ENCODE measurements at regions of chrX and their contacts with region 1.

Region 1: DNA sequence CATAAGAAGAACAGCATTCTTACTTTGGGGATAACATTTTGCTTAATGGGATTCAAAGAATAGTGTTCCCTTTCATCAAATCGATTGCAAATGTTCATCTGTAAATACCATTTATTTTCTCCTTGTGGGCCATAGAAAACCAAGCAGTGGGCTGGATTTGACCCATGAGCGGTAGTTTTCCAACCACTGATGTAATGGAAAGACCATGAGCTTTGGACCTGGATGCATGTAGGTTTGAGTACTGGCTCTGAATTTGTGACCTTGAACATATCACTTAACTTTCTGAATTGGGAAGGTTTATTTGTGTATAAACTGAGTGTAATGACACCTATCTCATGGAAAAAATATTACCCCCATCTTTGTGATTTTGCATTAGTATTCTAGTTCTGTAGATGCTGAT is 54.3 kb downstream of the REPS2 start:
- DNase-seq: no peak
- ATAC-seq: no peak
- H3K4me3 ChIP-seq: no peak overlapping the region
- H3K27ac ChIP-seq: no peak overlapping the region
- H3K4me1 ChIP-seq: no peaks in the 10 kb centered on the region
- H3K27me3 ChIP-seq: no peaks in the 10 kb centered on the region

Region 2: GRCh38 chrX:17039826-17040225 is 39.1 kb after region 1 on chrX:
- intact Hi-C with region 1: loop called in 1 of 2 experiments (anchors 5 kb)
- DNase-seq: no peak
- ATAC-seq: no peak
- H3K4me3 ChIP-seq: no peak overlapping the region
- H3K27ac ChIP-seq: no peak overlapping the region
- H3K4me1 ChIP-seq: no peaks in the 10 kb centered on the region
- H3K27me3 ChIP-seq: no peaks in the 10 kb centered on the region